ENCODE measurements at regions of chr19 and their contacts with region 1.

Region 1: GRCh38 chr19:55632463-55632834 is 8.1 kb upstream of the ZNF784 start:
- DNase-seq: peak in 1 of 2 experiments; percentile 94
- H3K4me3 ChIP-seq: no peak overlapping the region
- H3K27ac ChIP-seq: no peak overlapping the region
- H3K4me1 ChIP-seq: peaks cover 3 to 6% (median 6%) of the 10 kb centered on the region in 4 experiments; a peak in 6 of 7 replicates
- H3K27me3 ChIP-seq: no peaks in the 10 kb centered on the region
- CTCF ChIP-seq: peak; percentile 23 to 85 (median 83)
- EP300 ChIP-seq: no peak
- POLR2A ChIP-seq: no peak
- RAD21 ChIP-seq: peak; percentile 73 to 81

Region 2: GRCh38 chr19:55516878-55517620 is 115.4 kb before region 1 on chr19:
- CTCF ChIA-PET with region 1: interaction called, 12 read pairs
- POLR2A ChIA-PET with region 1: interaction called, 3 read pairs
- DNase-seq: peak; percentile 83 to 99
- H3K4me3 ChIP-seq: peak overlapping the region in 1 of 4 experiments; percentile 46; a peak in 2 of 8 replicates
- H3K27ac ChIP-seq: no peak overlapping the region
- H3K4me1 ChIP-seq: no peaks in the 10 kb centered on the region; a peak in 1 of 7 replicates
- H3K27me3 ChIP-seq: no peaks in the 10 kb centered on the region; a peak in 2 of 7 replicates
- CTCF ChIP-seq: peak; percentile 86 to 93 (median 90)
- EP300 ChIP-seq: no peak
- POLR2A ChIP-seq: no peak
- RAD21 ChIP-seq: peak; percentile 91 to 93

Region 3: GRCh38 chr19:55599468-55600279 is 32.8 kb before region 1 on chr19 and contains the start of gene FIZ1:
- CTCF ChIA-PET with region 1: interaction called, 12 read pairs
- POLR2A ChIA-PET with region 1: interaction called, 25 read pairs
- DNase-seq: peak; percentile 93 to 97
- H3K4me3 ChIP-seq: peak within 1 kb of the TSS; percentile 78 to 95 (median 86)
- H3K27ac ChIP-seq: peak within 1 kb of the TSS; percentile 100
- H3K4me1 ChIP-seq: peaks cover 0 to 14% (median 7%) of the 10 kb centered on the region in 4 experiments; a peak in 5 of 7 replicates
- H3K27me3 ChIP-seq: no peaks in the 10 kb centered on the region
- CTCF ChIP-seq: no peak
- EP300 ChIP-seq: 0 out of 3 replicates have a peak, but pooled peaks of 1 of the 2 experiments have one; percentile 41
- POLR2A ChIP-seq: peak in 1 of 2 experiments; percentile 81; a peak in 2 of 3 replicates
- RAD21 ChIP-seq: no peak
- total RNA-seq, gene FIZ1: 17.6 and 18.5 TPM in 2 replicates

Region 4: GRCh38 chr19:55643348-55644176 is 11.1 kb after region 1 on chr19 and contains the start of gene ZNF581:
- CTCF ChIA-PET with region 1: interaction called, 56 read pairs
- POLR2A ChIA-PET with region 1: interaction called, 96 read pairs
- DNase-seq: peak in 1 of 2 experiments; percentile 90
- H3K4me3 ChIP-seq: peak within 1 kb of the TSS; percentile 74 to 98 (median 88)
- H3K27ac ChIP-seq: peak within 1 kb of the TSS; percentile 48
- H3K4me1 ChIP-seq: peaks cover 0 to 22% (median 11%) of the 10 kb centered on the region in 4 experiments; a peak in 6 of 7 replicates
- H3K27me3 ChIP-seq: no peaks in the 10 kb centered on the region
- CTCF ChIP-seq: no peak
- EP300 ChIP-seq: peak in 1 of 2 experiments; percentile 56; a peak in 1 of 3 replicates
- POLR2A ChIP-seq: peak in 1 of 2 experiments; percentile 13; a peak in 2 of 3 replicates
- RAD21 ChIP-seq: no peak
- total RNA-seq, gene ZNF581: 73.0 and 76.0 TPM in 2 replicates

Region 5: GRCh38 chr19:55703790-55704215 is 71.4 kb after region 1 on chr19:
- CTCF ChIA-PET with region 1: no interaction called
- POLR2A ChIA-PET with region 1: no interaction called
- DNase-seq: peak; percentile 39 to 92
- H3K4me3 ChIP-seq: no peak overlapping the region
- H3K27ac ChIP-seq: no peak overlapping the region
- H3K4me1 ChIP-seq: no peaks in the 10 kb centered on the region; a peak in 1 of 7 replicates
- H3K27me3 ChIP-seq: no peaks in the 10 kb centered on the region
- CTCF ChIP-seq: peak; percentile 76 to 93 (median 91)
- EP300 ChIP-seq: no peak
- POLR2A ChIP-seq: no peak
- RAD21 ChIP-seq: peak; percentile 50 to 56; a peak in 3 of 4 replicates